ENCODE measurements at regions of chrX and their contacts with region 1.

Region 1: DNA sequence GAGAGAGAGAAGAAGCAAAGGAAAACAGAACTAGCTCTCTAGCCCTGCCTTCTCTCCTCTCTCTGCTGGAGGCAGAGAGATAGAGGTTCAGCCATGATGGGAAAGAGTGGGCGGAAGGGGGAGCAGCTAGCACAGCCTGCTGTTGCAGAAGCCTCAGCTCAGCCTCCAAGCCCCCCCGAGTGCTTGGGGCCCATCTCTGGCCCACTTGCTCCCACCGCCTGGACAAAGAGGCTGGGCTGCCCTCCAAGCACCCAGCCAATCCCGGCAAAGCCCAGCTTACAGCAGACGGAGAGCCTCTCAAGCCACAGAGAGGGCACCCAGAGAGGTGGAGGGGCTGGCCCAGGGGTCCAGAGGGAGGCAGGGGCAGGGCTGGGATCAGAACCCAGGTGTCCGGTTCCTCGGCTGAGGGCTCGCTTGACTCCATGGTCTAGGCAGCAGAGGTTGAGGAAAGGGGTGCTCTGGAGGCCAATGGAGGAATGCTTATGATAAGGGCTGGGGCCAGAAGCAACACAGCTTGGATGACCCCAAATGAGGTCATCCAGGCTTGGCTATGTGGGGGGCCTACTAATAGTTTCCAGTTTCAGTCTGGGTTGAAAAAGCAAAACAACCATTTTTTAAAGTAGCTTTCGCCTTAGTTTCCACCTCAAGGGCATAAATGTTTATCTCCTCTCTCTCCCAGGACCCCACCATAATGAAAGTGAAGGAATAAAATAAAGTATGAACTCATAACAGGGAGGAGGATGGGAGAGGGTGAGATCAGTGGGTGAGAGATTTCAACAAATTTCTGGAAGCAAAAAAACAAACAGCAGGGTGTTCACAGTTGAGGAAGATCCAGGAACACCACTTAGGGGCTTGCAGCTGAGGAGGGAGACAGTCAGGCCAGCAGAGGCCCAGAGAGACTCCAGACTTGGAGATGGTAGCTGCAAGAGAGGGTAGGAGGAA is 24.9 kb upstream of the IQSEC2 start:
- DNase-seq: no peak
- ATAC-seq: no peak
- H3K4me3 ChIP-seq: no peak overlapping the region
- H3K27ac ChIP-seq: no peak overlapping the region
- H3K4me1 ChIP-seq: no peaks in the 10 kb centered on the region; the same call in none of the 2 replicates
- H3K27me3 ChIP-seq: no peaks in the 10 kb centered on the region
- CTCF ChIP-seq: no peak

Region 2: GRCh38 chrX:51955200-51955599 is 1351.1 kb before region 1 on chrX:
- CTCF ChIA-PET with region 1: no interaction called
- POLR2A ChIA-PET with region 1: interaction called, 15 read pairs
- in situ Hi-C with region 1: no loop called
- intact Hi-C with region 1: no loop called
- DNase-seq: no peak
- ATAC-seq: no peak
- H3K4me3 ChIP-seq: no peak overlapping the region
- H3K27ac ChIP-seq: no peak overlapping the region
- H3K4me1 ChIP-seq: no peaks in the 10 kb centered on the region
- H3K27me3 ChIP-seq: no peaks in the 10 kb centered on the region
- CTCF ChIP-seq: no peak

Region 3: DNA sequence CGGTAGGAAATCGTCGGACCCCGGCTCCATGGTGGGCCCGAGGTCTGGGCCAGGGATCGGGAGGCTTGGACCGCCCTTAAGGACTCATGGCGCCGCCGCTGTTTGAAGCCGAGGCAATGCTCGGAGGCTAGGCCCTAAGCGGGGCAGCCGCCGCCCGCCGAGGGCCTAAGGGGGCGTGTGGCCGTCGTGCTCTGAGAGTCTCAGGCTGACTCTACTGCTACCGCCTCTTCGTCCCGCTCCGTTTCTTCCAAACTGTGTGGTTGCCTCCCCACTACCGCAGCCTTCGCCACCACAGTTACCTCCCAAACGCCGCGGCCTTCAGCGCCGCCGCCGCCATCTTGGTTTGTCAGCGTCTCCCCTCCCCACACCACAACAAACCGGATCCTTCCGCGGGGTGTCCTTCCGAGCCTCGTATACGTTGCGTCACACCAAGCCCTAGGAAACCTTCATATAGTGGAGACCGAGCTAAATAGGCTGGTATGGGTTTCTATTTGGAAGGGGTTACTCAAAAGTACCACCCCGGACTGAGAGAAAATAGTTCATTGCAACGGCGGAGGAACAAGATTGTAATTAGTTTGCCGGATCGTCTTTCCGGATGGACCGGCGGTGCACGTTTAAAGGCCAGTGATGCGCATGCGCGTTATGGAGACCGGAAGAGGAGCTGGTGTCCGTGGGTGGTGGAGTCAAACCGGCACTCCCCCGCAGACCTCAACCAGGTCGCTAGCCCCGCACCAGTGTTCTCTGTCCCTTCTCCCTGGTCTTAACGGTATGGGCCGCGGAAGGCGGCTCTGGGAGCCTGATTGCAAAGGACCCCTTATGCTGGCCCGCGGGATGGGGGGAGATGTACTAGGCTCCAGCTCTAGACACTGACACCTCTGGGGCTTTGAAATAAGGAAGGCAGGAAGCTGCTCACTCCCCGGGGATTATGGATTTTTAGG is 81.1 kb before region 1 on chrX and contains the start of gene KDM5C:
- CTCF ChIA-PET with region 1: no interaction called
- POLR2A ChIA-PET with region 1: no interaction called
- in situ Hi-C with region 1: no loop called
- intact Hi-C with region 1: no loop called
- DNase-seq: peak; percentile 60
- ATAC-seq: peak; percentile 87
- H3K4me3 ChIP-seq: peak within 1 kb of the TSS; percentile 86 to 96
- H3K27ac ChIP-seq: peak within 1 kb of the TSS; percentile 98
- H3K4me1 ChIP-seq: peaks cover 7% of the 10 kb centered on the region; the same call in 1 of the 2 replicates
- H3K27me3 ChIP-seq: no peaks in the 10 kb centered on the region
- CTCF ChIP-seq: no peak
- total RNA-seq, gene KDM5C: 104 TPM

Region 4: GRCh38 chrX:54301516-54301915 is 995.2 kb after region 1 on chrX:
- CTCF ChIA-PET with region 1: no interaction called
- POLR2A ChIA-PET with region 1: interaction called, 10 read pairs
- in situ Hi-C with region 1: no loop called
- intact Hi-C with region 1: no loop called
- DNase-seq: no peak
- ATAC-seq: no peak
- H3K4me3 ChIP-seq: no peak overlapping the region
- H3K27ac ChIP-seq: no peak overlapping the region
- H3K4me1 ChIP-seq: no peaks in the 10 kb centered on the region
- H3K27me3 ChIP-seq: no peaks in the 10 kb centered on the region
- CTCF ChIP-seq: no peak

Measured in Panc1 (cell line).